WTC11 (cell line): ENCODE measurements at regions of chr1 and their contacts with region 1.

Region 1: GRCh38 chr1:89608319-89608983 is 24.5 kb upstream of the LRRC8C start:
- DNase-seq: no peak
- ATAC-seq: no peak
- H3K4me3 Mint-ChIP-seq: no peak overlapping the region
- H3K27ac Mint-ChIP-seq: no peak overlapping the region
- H3K4me1 Mint-ChIP-seq: peaks cover 8% of the 10 kb centered on the region
- H3K27me3 Mint-ChIP-seq: no peaks in the 10 kb centered on the region
- CTCF ChIP-seq: no peak

Region 2: GRCh38 chr1:89622895-89623294 is 14.4 kb after region 1 on chr1:
- CTCF ChIA-PET with region 1: no interaction called
- POLR2A ChIA-PET with region 1: interaction called, 11 read pairs
- DNase-seq: no peak
- ATAC-seq: no peak; the same call in 1 of the 2 replicates
- H3K4me3 Mint-ChIP-seq: no peak overlapping the region
- H3K27ac Mint-ChIP-seq: no peak overlapping the region
- H3K4me1 Mint-ChIP-seq: no peaks in the 10 kb centered on the region
- H3K27me3 Mint-ChIP-seq: no peaks in the 10 kb centered on the region
- CTCF ChIP-seq: no peak